SK-N-SH (cell line): ENCODE measurements at regions of chr17 and their contacts with region 1.

Region 1: DNA sequence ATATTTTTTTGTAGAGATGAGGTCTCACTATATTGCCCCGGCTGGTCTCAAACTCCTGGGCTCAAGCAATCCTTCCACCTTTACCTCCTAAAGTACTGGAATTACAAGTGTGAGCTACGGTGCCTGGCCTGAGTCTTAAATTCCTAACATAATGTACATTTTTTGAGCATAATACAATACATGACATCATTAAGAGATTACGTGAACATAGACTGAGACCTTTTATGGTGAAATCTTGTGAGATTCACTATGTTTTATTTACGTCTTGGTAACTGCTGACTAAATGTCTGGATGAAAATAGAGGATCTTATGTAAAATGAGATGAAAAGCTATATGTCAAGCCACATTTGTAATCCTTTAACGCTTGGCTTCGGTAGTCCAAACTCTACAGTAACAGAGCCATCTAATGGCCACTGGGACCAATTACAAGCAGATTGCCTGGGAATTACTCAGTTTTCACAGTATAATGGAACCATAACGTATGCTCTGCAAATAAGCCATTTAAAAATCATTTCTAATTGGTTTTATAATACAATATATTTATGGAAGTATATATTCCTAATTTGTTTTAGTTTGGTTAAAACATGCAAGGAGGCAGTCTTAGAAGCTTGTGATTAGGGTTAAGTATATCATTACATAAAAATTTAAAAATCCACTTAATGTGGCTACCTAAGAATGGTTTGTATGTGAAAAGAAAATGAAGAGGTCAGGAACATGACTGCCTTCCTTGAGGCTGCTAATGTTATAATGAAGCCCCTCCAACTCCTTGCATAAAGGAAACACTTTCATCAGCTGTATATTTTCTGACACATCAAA is 8.1 kb upstream of the EFCAB13 start:
- DNase-seq: peak; percentile 80
- H3K4me3 ChIP-seq: no peak overlapping the region
- H3K27ac ChIP-seq: peak overlapping the region in 1 of 2 experiments; percentile 67; a peak in 2 of 4 replicates
- H3K4me1 ChIP-seq: peaks cover 1 to 18% of the 10 kb centered on the region in 2 experiments; a peak in 3 of 4 replicates
- H3K27me3 ChIP-seq: no peaks in the 10 kb centered on the region
- CTCF ChIP-seq: peak; percentile 99
- EP300 ChIP-seq: no peak
- RAD21 ChIP-seq: peak; percentile 100

Region 2: DNA sequence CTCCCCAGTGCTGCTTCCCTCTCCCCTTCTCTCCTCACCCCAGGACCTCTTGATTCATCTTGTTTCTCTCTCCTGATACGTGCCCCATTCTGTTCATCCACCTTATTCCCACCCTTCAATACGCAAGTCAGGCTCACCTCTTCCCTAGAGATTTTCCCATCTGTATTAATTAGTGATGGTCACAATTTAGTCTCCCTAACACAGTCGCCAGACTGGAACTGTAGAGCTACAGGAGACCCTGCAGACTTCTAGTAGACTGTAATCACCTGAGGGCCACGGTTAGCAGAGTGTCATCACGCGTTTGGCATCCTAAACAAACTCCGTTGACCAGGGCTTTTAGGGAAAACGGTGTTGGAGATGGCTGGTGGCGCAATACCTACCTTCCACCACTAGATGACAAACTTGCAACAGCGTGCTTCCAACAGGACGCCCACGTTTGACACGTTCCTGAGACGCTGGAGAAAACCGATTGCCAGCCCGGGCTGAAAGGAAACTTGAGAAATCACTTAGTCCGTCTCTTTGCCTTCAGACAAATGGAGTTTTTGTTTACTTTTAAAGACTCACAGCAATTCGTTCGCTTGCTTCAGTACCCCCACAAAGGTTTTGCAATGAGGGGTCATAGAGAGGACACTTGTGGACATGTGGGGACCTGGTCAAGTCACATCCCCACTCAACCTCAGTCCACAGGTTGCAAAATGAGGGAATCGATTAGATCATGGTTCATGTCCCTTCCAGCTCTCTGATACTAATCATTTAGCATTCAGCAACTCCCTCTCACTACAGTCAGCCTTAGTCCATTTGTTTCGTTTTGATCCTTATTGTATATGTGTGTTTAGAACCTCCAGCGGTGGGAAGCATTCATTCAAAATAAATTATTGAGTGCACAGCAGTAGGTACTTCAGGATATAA is 85.9 kb before region 1 on chr17:
- CTCF ChIA-PET with region 1: interaction called, 279 read pairs
- POLR2A ChIA-PET with region 1: interaction called, 3 read pairs
- DNase-seq: peak; percentile 87
- H3K4me3 ChIP-seq: peak overlapping the region; percentile 4 to 10; a peak in 1 of 4 replicates
- H3K27ac ChIP-seq: peak overlapping the region in 1 of 2 experiments; percentile 17; a peak in 2 of 4 replicates
- H3K4me1 ChIP-seq: peaks cover 5 to 12% of the 10 kb centered on the region in 2 experiments; a peak in 2 of 4 replicates
- H3K27me3 ChIP-seq: no peaks in the 10 kb centered on the region
- CTCF ChIP-seq: peak; percentile 100
- EP300 ChIP-seq: peak in 1 of 2 experiments; percentile 48; a peak in 1 of 4 replicates
- RAD21 ChIP-seq: peak; percentile 100

Region 3: DNA sequence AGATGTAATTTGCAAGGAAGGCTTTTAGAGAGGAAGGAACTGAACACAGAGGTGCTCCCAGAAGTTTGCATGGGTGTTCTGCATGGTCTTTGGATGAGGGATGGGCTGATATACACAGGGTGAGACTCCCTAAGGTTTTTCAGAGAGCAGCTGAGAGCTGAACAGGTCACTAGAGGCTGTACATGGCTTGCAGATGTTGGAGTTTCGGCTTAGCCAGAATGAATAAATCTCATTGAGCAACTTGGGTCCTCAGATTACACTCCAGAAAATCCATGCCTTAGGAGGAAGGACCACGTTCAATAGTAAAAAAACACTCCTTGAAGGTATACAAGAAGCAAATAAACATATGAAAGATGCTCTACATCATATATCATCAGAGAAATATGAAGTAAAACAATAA is 69.5 kb before region 1 on chr17:
- CTCF ChIA-PET with region 1: interaction called, 63 read pairs
- POLR2A ChIA-PET with region 1: no interaction called
- DNase-seq: no peak
- H3K4me3 ChIP-seq: no peak overlapping the region
- H3K27ac ChIP-seq: no peak overlapping the region
- H3K4me1 ChIP-seq: no peaks in the 10 kb centered on the region
- H3K27me3 ChIP-seq: no peaks in the 10 kb centered on the region
- CTCF ChIP-seq: no peak
- EP300 ChIP-seq: no peak
- RAD21 ChIP-seq: no peak

Region 4: GRCh38 chr17:47262586-47262985 is 53.1 kb before region 1 on chr17:
- CTCF ChIA-PET with region 1: interaction called, 84 read pairs
- POLR2A ChIA-PET with region 1: no interaction called
- DNase-seq: no peak
- H3K4me3 ChIP-seq: no peak overlapping the region
- H3K27ac ChIP-seq: no peak overlapping the region
- H3K4me1 ChIP-seq: peaks cover 3 to 24% of the 10 kb centered on the region in 2 experiments; a peak in 3 of 4 replicates
- H3K27me3 ChIP-seq: no peaks in the 10 kb centered on the region
- CTCF ChIP-seq: no peak
- EP300 ChIP-seq: no peak
- RAD21 ChIP-seq: no peak

Region 5: GRCh38 chr17:47288531-47289116 is 27.0 kb before region 1 on chr17:
- CTCF ChIA-PET with region 1: interaction called, 12 read pairs
- POLR2A ChIA-PET with region 1: no interaction called
- DNase-seq: no peak
- H3K4me3 ChIP-seq: no peak overlapping the region
- H3K27ac ChIP-seq: no peak overlapping the region
- H3K4me1 ChIP-seq: no peaks in the 10 kb centered on the region
- H3K27me3 ChIP-seq: no peaks in the 10 kb centered on the region
- CTCF ChIP-seq: no peak
- EP300 ChIP-seq: no peak
- RAD21 ChIP-seq: no peak

Region 6: DNA sequence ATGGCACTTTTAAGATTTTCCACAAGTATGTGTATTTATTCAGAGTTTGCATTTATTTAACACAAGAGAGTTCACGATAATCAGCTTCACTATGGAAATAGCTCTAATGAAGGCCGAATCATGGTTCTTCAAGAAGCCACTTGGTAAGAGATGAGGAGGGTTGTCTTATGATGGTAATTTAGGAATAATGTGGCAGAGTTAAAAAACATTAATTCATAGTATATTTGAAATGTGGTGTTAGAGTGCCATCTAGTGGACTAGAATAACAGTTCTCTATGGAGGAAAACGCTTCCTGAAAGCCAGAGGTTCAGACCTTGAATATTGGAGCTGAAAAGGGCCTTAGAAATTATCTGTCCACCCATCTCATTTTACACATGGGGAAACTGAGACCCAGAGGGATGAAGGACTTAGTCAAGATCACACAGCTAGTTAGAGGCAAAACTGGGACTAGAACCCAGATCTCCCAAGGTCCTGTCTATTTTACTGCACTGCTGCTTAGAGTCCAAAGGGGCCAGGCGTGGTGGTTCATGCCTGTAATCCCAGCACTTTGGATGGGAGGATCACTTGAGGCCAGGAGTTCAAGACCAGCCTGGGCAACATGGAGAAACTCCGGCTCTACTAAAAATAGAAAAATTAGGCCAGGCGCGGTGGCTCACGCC is 300.2 kb after region 1 on chr17:
- CTCF ChIA-PET with region 1: interaction called, 27 read pairs
- POLR2A ChIA-PET with region 1: no interaction called
- DNase-seq: peak; percentile 60
- H3K4me3 ChIP-seq: no peak overlapping the region
- H3K27ac ChIP-seq: no peak overlapping the region
- H3K4me1 ChIP-seq: peaks cover 0 to 2% of the 10 kb centered on the region in 2 experiments; a peak in 1 of 4 replicates
- H3K27me3 ChIP-seq: no peaks in the 10 kb centered on the region
- CTCF ChIP-seq: peak; percentile 95
- EP300 ChIP-seq: no peak
- RAD21 ChIP-seq: peak; percentile 88